Activated T-helper 2 cell treated with anti-CD3 and anti-CD28 coated beads, Interferon-gamma antibody, Interleukin-2, Interleukin-4, amounts not matched to agents 10 μg/mL and 5 μg/mL and 100 μg/mL, durations not matched to agents 14 hours and 24 hours and 36 hours (primary cell): ENCODE measurements at regions of chr3 and their contacts with region 1.

Region 1: DNA sequence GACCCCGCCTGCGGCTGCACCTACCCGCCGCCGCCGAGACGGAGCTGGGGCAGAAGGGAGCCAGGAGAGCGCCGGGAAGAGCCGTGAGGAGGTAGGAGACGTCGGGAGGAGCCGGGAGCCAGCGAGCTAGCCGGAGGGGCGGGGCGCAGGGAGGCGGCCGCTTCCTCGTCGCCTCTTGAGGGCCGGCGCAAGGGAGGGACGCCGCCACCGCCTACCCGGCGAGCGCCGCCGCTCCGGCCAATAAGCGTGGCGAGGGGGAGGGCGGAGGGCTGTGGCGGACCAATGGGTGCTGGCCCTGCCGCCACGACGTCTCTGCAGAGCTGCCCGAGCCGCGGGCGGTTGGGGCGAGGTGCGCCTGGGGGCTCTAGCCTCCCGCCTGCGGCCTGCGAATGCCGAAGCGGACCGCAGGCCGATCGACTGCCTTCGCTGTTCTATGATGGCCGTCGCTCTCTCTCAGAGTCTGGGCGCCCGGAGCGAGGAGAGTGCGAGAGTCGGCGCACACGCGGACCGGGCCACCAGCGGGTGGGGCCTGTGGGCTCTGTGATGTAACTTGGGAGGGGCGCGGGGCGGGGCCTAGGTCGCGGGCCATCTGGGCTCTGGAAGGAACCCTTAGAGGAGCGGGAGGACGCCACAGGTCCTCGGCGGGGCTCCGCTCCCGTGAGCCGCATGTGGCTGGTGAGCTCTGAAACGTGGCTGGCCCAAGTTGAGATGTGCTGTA is 72.7 kb upstream of the MAP4 start:
- DNase-seq: peak; percentile 94
- H3K4me3 Mint-ChIP-seq: peak overlapping the region; percentile 97
- H3K27ac Mint-ChIP-seq: peak overlapping the region; percentile 97
- H3K4me1 Mint-ChIP-seq: peaks cover 21% of the 10 kb centered on the region
- H3K27me3 Mint-ChIP-seq: peaks cover 2% of the 10 kb centered on the region

Region 2: GRCh38 chr3:48112813-48113212 is 23.9 kb after region 1 on chr3:
- intact Hi-C with region 1: loop called (anchors 2 kb)
- DNase-seq: no peak
- H3K4me3 Mint-ChIP-seq: no peak overlapping the region
- H3K27ac Mint-ChIP-seq: peak overlapping the region; percentile 71
- H3K4me1 Mint-ChIP-seq: peaks cover 17% of the 10 kb centered on the region
- H3K27me3 Mint-ChIP-seq: no peaks in the 10 kb centered on the region

Region 3: GRCh38 chr3:48151058-48151806 is 62.3 kb after region 1 on chr3:
- intact Hi-C with region 1: loop called (anchors 10 kb)
- DNase-seq: peak; percentile 50
- H3K4me3 Mint-ChIP-seq: no peak overlapping the region
- H3K27ac Mint-ChIP-seq: no peak overlapping the region
- H3K4me1 Mint-ChIP-seq: peaks cover 2% of the 10 kb centered on the region
- H3K27me3 Mint-ChIP-seq: no peaks in the 10 kb centered on the region